H1 (cell line): ENCODE measurements at regions of chr19 and their contacts with region 1.

Region 1: DNA sequence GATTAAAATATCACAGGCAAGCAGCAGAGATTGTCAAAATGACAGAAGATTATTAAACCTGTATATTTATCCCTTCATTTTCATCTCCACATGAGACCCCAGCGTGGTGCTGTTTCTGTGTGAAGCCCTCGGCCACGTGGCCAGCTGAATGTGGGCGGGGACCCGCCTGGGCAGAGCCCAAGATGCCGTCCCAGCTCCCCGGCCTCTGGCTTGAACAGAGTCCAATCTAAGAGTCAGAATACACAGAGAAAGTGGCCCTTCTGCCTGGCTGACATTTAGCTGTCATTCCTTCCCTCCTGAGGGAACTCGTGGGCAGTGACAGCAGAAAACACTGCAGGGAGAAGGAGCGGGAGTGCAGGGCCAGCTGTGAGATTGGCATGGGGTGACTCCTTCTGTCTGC is 34.9 kb upstream of the UQCRFS1 start:
- DNase-seq: no peak
- H3K4me3 ChIP-seq: no peak overlapping the region
- H3K27ac ChIP-seq: no peak overlapping the region
- H3K4me1 ChIP-seq: no peaks in the 10 kb centered on the region; a peak in 1 of 7 replicates
- H3K27me3 ChIP-seq: no peaks in the 10 kb centered on the region
- CTCF ChIP-seq: no peak
- EP300 ChIP-seq: no peak
- POLR2A ChIP-seq: no peak
- RAD21 ChIP-seq: no peak

Region 2: DNA sequence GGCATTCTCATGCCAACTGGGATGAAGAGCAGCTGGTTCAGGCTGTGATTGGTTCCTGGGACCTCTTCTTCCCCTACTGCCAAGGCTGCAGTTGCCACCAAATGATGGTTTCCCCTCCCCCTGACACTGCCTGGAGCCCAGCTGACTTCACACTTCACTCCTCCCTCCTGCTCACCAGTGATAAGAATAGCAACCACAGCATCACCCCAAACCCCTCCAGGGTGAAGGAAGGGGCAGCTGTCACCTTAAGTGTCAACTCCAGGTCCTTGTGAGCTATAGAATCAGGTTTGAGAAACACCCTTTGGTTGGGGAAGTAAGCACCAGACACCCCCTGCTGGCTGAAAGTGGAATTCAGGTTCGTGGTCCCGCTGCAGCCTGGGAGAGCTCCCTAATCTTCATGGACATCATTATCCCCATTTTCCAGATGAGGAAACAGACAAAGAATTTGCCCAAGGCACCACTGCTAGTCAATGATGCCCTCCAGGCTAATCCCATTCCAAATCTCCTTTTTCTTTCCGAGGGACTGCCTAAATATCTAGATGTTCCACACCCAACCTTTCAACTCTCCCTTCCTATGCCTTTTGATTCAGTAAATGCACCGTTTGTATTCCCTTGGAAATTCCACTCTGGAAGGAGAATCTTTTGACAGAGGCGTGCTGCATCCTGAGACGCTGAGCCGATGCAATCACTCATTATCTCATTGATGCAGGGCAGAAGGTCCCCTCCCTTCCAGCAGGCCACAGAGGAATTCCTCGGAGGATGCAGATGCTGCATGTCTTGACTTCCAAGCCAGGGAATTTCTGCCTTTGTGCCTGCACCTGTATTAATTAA is 15.6 kb after region 1 on chr19:
- CTCF ChIA-PET with region 1: interaction called, 117 read pairs
- POLR2A ChIA-PET with region 1: no interaction called
- DNase-seq: peak in 1 of 2 experiments; percentile 91
- H3K4me3 ChIP-seq: no peak overlapping the region
- H3K27ac ChIP-seq: no peak overlapping the region
- H3K4me1 ChIP-seq: peaks cover 0 to 3% (median 0%) of the 10 kb centered on the region in 4 experiments; a peak in 4 of 7 replicates
- H3K27me3 ChIP-seq: no peaks in the 10 kb centered on the region; a peak in 2 of 7 replicates
- CTCF ChIP-seq: peak; percentile 75 to 86 (median 85)
- EP300 ChIP-seq: no peak
- POLR2A ChIP-seq: no peak
- RAD21 ChIP-seq: peak; percentile 76 to 80